Activated naive CD4-positive, alpha-beta T cell treated with anti-CD3 and anti-CD28 coated beads for 36 hours (primary cell): ENCODE measurements at regions of chr12 and their contacts with region 1.

Region 1: DNA sequence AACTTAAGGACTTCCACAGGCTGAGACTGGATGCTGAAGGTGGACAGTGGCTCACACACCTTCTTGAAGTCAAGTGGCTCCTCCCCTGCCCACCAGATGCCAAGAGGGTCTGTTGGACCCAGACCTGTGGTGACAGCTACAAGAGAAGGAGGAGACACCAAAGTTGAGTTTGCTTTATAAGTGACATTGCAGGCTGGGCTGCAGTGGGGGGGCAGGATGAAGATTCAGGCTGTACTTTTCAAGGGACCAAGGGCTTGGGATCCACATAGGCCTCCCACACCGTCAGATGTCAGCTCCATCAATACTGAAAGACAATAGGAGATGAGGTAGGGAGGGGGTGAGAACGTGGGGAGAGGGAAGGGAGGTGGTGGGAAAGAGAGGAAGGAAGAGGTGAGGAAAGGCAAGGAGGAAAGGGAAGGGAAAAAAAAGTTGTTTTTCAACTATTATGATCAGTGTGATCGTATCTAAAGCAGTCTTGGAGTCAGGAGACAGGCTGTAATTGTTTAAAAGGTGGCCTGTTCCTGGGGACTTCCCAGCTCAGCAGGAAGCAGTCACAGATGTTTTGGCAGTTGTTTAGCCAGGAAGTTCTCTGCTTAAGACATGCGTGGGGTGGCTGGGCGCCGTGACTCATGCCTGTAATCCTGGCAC is 84.1 kb upstream of the RESF1 start:
- DNase-seq: peak; percentile 90
- H3K4me3 Mint-ChIP-seq: peak overlapping the region; percentile 73
- H3K27ac Mint-ChIP-seq: peak overlapping the region; percentile 100
- H3K4me1 Mint-ChIP-seq: peaks cover 37% of the 10 kb centered on the region
- H3K27me3 Mint-ChIP-seq: no peaks in the 10 kb centered on the region

Region 2: GRCh38 chr12:30822385-30823155 is 1052.5 kb before region 1 on chr12:
- CTCF ChIA-PET with region 1: no interaction called
- intact Hi-C with region 1: no loop called
- DNase-seq: peak; percentile 24
- H3K4me3 Mint-ChIP-seq: peak overlapping the region; percentile 71
- H3K27ac Mint-ChIP-seq: no peak overlapping the region
- H3K4me1 Mint-ChIP-seq: peaks cover 11% of the 10 kb centered on the region
- H3K27me3 Mint-ChIP-seq: peaks cover 45% of the 10 kb centered on the region

Region 3: GRCh38 chr12:31346267-31346666 is 528.8 kb before region 1 on chr12:
- CTCF ChIA-PET with region 1: no interaction called
- intact Hi-C with region 1: no loop called
- DNase-seq: no peak
- H3K4me3 Mint-ChIP-seq: no peak overlapping the region
- H3K27ac Mint-ChIP-seq: no peak overlapping the region
- H3K4me1 Mint-ChIP-seq: no peaks in the 10 kb centered on the region
- H3K27me3 Mint-ChIP-seq: no peaks in the 10 kb centered on the region

Region 4: GRCh38 chr12:31813305-31813704 is 61.8 kb before region 1 on chr12:
- CTCF ChIA-PET with region 1: no interaction called
- intact Hi-C with region 1: loop called (anchors 2 kb)
- DNase-seq: no peak
- H3K4me3 Mint-ChIP-seq: no peak overlapping the region
- H3K27ac Mint-ChIP-seq: no peak overlapping the region
- H3K4me1 Mint-ChIP-seq: peaks cover 18% of the 10 kb centered on the region
- H3K27me3 Mint-ChIP-seq: no peaks in the 10 kb centered on the region

Region 5: DNA sequence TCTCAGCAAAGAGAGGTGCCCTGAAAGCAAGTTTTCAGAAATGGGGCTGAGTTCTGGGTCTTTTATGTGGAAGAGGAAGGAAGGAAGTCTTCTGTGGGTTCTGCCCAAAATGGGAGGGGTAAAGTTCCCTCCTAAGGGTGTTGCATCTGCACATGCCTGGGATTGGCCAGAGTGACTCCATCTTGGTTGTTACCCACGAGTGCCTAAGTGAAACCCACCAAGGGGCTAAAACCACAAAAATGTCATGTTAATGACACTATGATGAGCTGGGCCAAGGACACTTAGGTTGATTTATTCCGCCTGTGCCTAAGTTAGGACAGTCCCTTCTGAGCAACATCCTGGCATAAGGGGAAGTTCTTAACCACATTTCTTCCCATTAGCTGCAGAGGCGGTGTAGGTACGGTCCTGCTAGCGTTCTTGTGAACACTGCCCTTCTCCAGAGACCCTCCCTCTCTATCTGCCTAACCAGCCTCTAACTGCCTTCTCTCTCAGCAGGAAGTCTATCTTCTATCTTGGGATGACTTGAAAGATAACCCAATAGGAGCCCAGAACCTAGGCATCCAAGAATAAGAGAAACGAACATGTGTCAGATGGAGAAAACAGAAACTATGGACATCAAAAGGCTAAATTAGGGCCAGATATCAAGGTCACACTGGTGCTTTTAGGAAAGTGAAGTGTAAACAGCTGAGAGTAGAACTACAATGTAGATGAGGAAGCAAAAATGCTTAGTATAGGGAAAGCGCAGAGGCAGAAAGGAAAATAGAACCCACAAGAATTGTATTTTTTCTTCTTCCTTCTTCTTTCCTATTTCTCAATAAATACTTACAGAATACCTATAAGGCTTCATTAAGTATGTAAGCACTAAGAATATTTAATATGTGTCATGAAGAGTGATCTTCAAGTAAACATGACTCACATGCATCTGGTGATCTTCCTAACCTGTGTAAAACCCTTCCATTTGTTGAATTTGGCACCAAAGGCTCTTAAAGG is 42.0 kb before region 1 on chr12:
- CTCF ChIA-PET with region 1: no interaction called
- intact Hi-C with region 1: loop called (anchors 2 kb)
- DNase-seq: peak; percentile 63
- H3K4me3 Mint-ChIP-seq: no peak overlapping the region
- H3K27ac Mint-ChIP-seq: peak overlapping the region; percentile 89
- H3K4me1 Mint-ChIP-seq: peaks cover 46% of the 10 kb centered on the region
- H3K27me3 Mint-ChIP-seq: no peaks in the 10 kb centered on the region

Region 6: DNA sequence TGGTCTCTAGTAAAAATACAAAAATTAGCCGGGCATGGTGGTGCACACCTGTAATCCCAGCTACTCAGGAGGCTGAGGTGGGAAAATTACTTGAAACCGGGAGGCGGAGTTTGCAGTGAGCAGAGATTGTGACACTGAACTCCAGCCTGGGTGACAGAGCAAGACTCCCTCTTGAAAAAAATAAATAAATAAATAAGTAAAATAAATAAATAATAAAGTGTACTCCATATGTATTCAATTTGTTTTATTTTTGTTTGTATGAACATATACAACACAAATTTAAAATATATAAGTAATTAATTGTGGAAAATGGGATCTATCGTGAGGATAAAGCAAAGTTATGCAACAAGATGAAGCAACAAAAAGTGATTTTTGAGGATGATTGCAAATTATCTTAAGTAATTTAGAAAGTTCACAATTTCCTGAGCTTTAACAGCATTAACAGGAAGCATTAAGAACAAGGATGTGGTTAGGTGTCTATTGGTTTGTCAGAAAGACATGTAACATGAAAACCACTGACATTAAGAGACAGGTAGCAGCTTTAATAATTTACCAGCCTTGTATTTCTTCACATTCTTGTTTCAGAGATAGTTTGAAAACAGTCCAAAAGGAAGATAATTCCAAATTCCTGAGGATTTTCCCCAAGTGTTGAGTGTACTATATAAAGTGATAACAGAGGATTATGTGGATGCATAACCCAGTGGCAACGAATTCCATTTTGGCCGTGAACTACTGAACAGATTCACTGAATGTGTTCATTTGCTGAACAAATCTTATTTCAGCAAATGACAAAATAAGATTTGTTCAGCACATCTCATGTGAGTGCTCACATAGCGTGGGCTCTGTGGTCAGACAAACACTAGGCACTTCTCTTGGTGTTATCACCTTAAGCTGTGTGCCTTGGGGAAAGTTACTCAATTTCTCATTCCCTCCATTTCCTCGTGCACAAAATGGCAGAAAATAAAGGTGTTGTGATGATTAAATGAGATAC is 15.5 kb after region 1 on chr12:
- CTCF ChIA-PET with region 1: interaction called, 5 read pairs
- intact Hi-C with region 1: loop called (anchors 1 kb)
- DNase-seq: no peak
- H3K4me3 Mint-ChIP-seq: peak overlapping the region; percentile 18
- H3K27ac Mint-ChIP-seq: peak overlapping the region; percentile 90
- H3K4me1 Mint-ChIP-seq: peaks cover 54% of the 10 kb centered on the region
- H3K27me3 Mint-ChIP-seq: no peaks in the 10 kb centered on the region